ENCODE measurements at regions of chr7 and their contacts with region 1.

Region 1: GRCh38 chr7:91880413-91881241 is at the start of gene MTERF1:
- DNase-seq: peak; percentile 95
- H3K4me3 ChIP-seq: peak within 1 kb of the TSS; percentile 69 to 85 (median 76)
- H3K27ac ChIP-seq: peak within 1 kb of the TSS; percentile 61 to 73 (median 63)
- H3K4me1 ChIP-seq: peaks cover 0 to 16% (median 12%) of the 10 kb centered on the region in 4 donors
- H3K27me3 ChIP-seq: no peaks in the 10 kb centered on the region
- CTCF ChIP-seq: peak; percentile 90 to 93 (median 93)
- EP300 ChIP-seq: no peak
- POLR2A ChIP-seq: no peak
- total RNA-seq, gene MTERF1: 8.3 to 11.4 (median 9.1) TPM

Region 2: DNA sequence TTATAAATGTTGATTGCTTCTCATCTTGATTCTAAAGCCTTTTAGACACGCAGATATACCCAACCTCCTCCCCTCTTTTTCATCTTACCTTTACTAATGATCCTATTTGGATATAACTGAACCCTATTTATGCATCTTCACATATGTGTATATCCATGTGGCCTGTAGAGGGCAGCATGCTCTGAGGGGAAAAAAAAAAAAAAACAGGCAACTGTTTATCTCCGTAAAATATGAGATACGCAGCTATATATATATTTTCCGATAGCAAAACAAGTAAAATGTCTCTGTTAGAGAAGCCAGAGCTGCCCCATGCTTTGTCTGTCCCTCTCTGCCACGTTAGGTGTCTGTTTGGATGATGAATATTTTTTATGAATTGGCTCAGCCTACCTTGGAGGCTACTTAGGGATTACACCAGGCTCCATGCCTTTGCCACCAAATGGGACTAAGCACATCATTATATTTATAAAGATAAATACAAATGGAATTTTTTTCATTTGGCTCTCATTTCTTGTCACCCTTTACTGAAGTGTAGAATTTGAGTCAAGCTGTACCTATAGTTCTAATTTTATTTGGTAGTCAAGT is 791.2 kb before region 1 on chr7:
- intact Hi-C with region 1: loop called (anchors 5 kb)
- DNase-seq: no peak
- H3K4me3 ChIP-seq: peak overlapping the region in 3 of 4 donors; percentile 22 to 30 (median 23)
- H3K27ac ChIP-seq: no peak overlapping the region
- H3K4me1 ChIP-seq: no peaks in the 10 kb centered on the region
- H3K27me3 ChIP-seq: no peaks in the 10 kb centered on the region
- CTCF ChIP-seq: peak in 3 of 4 experiments; percentile 22 to 76 (median 50)
- EP300 ChIP-seq: no peak
- POLR2A ChIP-seq: no peak

Region 3: DNA sequence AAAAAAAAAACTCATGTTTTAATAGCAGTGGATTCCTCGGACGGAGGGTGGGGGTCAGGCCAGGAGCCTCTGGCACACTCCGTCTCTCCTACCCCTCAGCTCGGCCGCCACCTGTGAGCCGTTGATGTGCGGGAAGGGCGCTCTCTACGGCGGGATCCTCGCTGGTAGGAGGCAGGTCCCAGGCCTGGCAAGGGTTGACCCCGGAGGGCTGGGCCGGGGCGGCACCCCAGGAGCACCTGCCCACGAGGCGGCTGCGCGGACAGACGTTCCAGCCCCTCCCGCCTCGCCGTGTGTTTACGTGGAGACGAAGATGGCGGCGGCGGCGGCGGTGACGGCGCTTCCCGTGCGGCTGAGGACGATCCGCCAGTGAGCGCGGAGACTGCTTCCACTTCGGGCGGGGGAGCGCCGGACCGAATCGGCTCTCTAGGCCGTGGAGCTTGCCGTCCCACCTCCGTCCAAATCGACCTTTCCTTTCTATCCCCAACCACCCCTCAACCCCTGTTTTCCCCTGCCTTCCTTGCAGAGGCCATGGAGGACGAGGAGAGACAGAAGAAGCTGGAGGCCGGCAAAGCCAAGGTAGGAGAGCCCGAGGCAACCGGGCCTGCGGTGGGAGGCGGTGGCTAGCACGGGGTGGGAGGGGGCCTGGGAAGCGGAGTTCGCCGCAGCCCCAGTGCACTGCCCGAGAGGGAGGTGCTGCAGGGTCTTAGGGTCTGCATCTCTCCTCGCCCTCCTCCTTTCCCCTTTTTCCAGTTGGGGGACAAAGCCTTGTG is 60.1 kb after region 1 on chr7 and contains the start of gene AKAP9:
- intact Hi-C with region 1: loop called (anchors 1 kb)
- DNase-seq: peak; percentile 92
- H3K4me3 ChIP-seq: peak within 1 kb of the TSS; percentile 71 to 93 (median 82)
- H3K27ac ChIP-seq: peak within 1 kb of the TSS; percentile 93 to 96 (median 94)
- H3K4me1 ChIP-seq: peaks cover 0 to 34% (median 26%) of the 10 kb centered on the region in 4 donors
- H3K27me3 ChIP-seq: no peaks in the 10 kb centered on the region
- CTCF ChIP-seq: no peak
- EP300 ChIP-seq: no peak
- POLR2A ChIP-seq: peak; percentile 48 to 58
- total RNA-seq, gene AKAP9: 48.1 to 78.7 (median 59.3) TPM

Region 4: DNA sequence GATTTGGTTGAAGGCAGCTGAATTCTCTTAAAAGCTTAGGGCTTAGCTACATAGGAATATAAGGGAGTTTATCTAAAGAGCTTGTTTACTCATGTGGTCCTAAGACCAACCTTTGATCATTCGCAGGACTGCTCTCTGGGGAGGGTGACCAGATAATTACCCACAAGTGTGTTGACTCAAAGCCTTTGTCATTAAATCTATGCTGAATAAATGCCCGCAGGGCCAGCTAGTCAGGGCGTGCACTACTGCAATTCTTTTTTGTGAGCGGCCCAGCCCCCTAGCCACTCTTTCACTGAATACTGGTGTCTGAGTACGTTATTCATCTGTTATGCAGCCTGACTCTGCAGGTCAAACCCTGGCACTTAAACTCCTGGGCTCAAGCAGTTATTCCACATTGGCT is 129.6 kb after region 1 on chr7:
- intact Hi-C with region 1: loop called (anchors 10 kb)
- DNase-seq: no peak
- H3K4me3 ChIP-seq: no peak overlapping the region
- H3K27ac ChIP-seq: no peak overlapping the region
- H3K4me1 ChIP-seq: no peaks in the 10 kb centered on the region
- H3K27me3 ChIP-seq: no peaks in the 10 kb centered on the region
- CTCF ChIP-seq: no peak
- EP300 ChIP-seq: no peak
- POLR2A ChIP-seq: no peak

Region 5: DNA sequence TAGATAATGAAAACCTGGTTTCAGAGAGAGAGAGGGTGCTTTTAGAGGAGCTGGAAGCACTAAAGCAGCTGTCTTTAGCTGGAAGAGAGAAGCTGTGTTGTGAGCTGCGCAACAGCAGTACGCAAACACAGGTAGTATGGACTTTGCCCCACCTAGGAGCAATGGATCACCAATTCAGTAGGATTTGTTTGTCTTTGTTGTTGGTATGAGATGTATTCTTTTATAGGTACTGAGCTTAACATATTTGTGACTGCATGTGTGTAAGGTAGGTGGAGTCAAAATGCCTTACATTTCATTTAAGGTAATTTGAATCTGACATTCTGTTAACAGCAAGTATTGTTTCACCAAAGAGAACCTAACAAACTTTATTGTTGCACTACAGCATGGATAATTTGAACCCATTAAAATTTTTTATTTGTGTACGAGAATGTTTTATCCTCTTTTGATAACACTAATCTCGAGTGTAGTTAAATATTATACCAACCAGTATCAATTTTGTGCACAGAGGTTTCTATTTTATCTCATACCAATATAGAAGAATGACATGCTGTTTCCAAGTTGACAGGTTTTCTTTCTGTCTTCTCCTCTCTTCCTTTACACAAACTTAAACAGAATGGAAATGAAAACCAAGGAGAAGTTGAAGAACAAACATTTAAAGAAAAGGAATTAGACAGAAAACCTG is 161.6 kb after region 1 on chr7:
- intact Hi-C with region 1: loop called (anchors 10 kb)
- DNase-seq: no peak
- H3K4me3 ChIP-seq: no peak overlapping the region
- H3K27ac ChIP-seq: no peak overlapping the region
- H3K4me1 ChIP-seq: peaks cover 0 to 13% (median 10%) of the 10 kb centered on the region in 4 donors
- H3K27me3 ChIP-seq: no peaks in the 10 kb centered on the region
- CTCF ChIP-seq: no peak
- EP300 ChIP-seq: no peak
- POLR2A ChIP-seq: no peak

Region 6: GRCh38 chr7:92134271-92135051 is 253.8 kb after region 1 on chr7 and contains the start of gene CYP51A1:
- intact Hi-C with region 1: loop called (anchors 10 kb)
- DNase-seq: peak; percentile 97
- H3K4me3 ChIP-seq: peak within 1 kb of the TSS; percentile 78 to 91 (median 84)
- H3K27ac ChIP-seq: peak within 1 kb of the TSS; percentile 87 to 95 (median 92)
- H3K4me1 ChIP-seq: peaks cover 0 to 21% (median 10%) of the 10 kb centered on the region in 4 donors
- H3K27me3 ChIP-seq: no peaks in the 10 kb centered on the region
- CTCF ChIP-seq: no peak
- EP300 ChIP-seq: peak in 2 of 4 donors; percentile 49 to 63
- POLR2A ChIP-seq: peak; percentile 93
- total RNA-seq, gene CYP51A1: 17.7 to 27.8 (median 25.1) TPM

Measured in sigmoid colon (tissue), 7 donors.